HAP-1 (cell line): ENCODE measurements at regions of chr17 and their contacts with region 1.

Region 1: GRCh38 chr17:35119368-35120165 is at the start of gene RAD51D:
- DNase-seq: peak; percentile 83 to 92
- H3K4me3 ChIP-seq: peak within 1 kb of the TSS; percentile 68
- H3K4me1 ChIP-seq: peaks cover 7% of the 10 kb centered on the region
- H3K27me3 ChIP-seq: no peaks in the 10 kb centered on the region

Region 2: GRCh38 chr17:34533811-34534527 is 585.6 kb before region 1 on chr17:
- in situ Hi-C with region 1: loop called (anchors 10 kb)
- DNase-seq: no peak
- H3K4me3 ChIP-seq: no peak overlapping the region
- H3K4me1 ChIP-seq: no peaks in the 10 kb centered on the region
- H3K27me3 ChIP-seq: no peaks in the 10 kb centered on the region

Region 3: DNA sequence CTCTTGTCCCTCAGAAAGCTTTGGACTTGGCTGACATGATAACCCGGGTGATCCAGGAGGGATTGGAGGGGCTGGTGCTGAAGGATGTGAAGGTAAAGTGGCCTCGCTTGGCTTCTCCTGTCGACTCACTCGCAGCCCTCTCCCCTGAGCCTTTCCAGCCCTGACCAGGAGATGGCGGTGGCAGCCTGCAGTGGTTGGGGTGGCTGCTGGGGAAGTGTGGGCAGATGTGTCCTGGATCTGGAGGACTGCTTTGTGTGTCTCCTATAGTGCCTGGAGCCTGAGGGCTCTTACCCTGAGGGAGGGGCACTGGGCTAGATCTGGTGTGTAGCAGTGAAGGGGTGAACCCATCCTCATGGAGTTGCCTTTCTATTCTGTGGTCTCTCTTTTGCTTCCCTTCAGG is 121.4 kb before region 1 on chr17:
- in situ Hi-C with region 1: loop called (anchors 5 kb)
- DNase-seq: peak; percentile 46 to 78
- H3K4me3 ChIP-seq: no peak overlapping the region
- H3K4me1 ChIP-seq: no peaks in the 10 kb centered on the region
- H3K27me3 ChIP-seq: no peaks in the 10 kb centered on the region

Region 4: GRCh38 chr17:35189291-35189690 is 69.7 kb after region 1 on chr17:
- in situ Hi-C with region 1: no loop called
- DNase-seq: no peak
- H3K4me3 ChIP-seq: no peak overlapping the region
- H3K4me1 ChIP-seq: no peaks in the 10 kb centered on the region
- H3K27me3 ChIP-seq: no peaks in the 10 kb centered on the region